Mucosa of descending colon (tissue), 3 donors: ENCODE measurements at regions of chr6 and their contacts with region 1.

Region 1: DNA sequence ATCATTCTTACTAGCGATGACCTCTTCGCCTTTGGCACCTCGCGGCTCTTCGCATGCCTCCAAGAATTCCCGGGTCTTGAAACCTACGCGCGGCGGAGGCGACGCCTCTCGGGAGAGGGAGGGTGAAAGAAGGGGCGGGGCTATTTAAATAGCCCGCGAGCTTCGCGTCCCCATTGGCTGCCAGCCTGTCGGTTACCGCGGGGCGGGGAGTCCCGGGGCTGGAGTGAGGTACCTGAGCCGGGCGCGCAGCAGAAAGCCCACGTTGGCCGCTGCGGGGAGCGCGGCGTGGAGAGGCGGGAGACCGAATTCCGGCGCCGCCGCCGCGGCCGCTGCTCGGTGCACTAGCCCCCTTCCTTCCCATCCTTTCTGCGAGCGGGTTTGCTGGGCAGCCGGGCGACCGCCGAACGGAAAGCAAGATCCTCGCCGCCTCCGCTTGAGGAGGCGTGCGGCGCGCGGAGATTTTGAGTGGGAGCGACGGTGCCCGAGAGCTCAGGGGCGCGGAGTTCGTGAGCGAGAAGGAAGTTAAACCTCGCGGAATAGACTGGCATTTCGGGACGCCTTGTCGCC is at the start of gene BMP6:
- DNase-seq: peak; percentile 89 to 90 (median 89)
- ATAC-seq: peak; percentile 97
- H3K4me3 ChIP-seq: no peak within 1 kb of the TSS
- H3K4me1 ChIP-seq: peaks cover 31% of the 10 kb centered on the region
- CTCF ChIP-seq: no peak
- total RNA-seq, gene BMP6: 0.55 to 1.9 (median 0.98) TPM

Region 2: GRCh38 chr6:7671076-7671475 is 54.9 kb before region 1 on chr6:
- intact Hi-C with region 1: no loop called
- DNase-seq: no peak
- ATAC-seq: no peak
- H3K4me3 ChIP-seq: no peak overlapping the region
- H3K4me1 ChIP-seq: peaks cover 3% of the 10 kb centered on the region
- CTCF ChIP-seq: no peak

Region 3: GRCh38 chr6:8006208-8006607 is 280.3 kb after region 1 on chr6:
- intact Hi-C with region 1: loop called (anchors 5 to 10 kb)
- DNase-seq: peak in 1 of 3 donors; percentile 23
- ATAC-seq: no peak
- H3K4me3 ChIP-seq: no peak overlapping the region
- H3K4me1 ChIP-seq: no peaks in the 10 kb centered on the region
- CTCF ChIP-seq: no peak